ENCODE measurements at regions of chr1 and their contacts with region 1.

Region 1: GRCh38 chr1:22930235-22930912 is 42.3 kb downstream of the LACTBL1 start:
- DNase-seq: peak; percentile 75 to 91 (median 90)
- ATAC-seq: peak; percentile 98
- H3K4me3 ChIP-seq: no peak overlapping the region
- H3K27ac ChIP-seq: no peak overlapping the region
- H3K4me1 ChIP-seq: no peaks in the 10 kb centered on the region; a peak in 1 of 5 replicates
- H3K27me3 ChIP-seq: peaks cover 23 to 55% of the 10 kb centered on the region in 2 experiments
- CTCF ChIP-seq: peak; percentile 89 to 93 (median 91)
- EP300 ChIP-seq: no peak
- POLR2A ChIP-seq: no peak
- RAD21 ChIP-seq: peak; percentile 71 to 91

Region 2: DNA sequence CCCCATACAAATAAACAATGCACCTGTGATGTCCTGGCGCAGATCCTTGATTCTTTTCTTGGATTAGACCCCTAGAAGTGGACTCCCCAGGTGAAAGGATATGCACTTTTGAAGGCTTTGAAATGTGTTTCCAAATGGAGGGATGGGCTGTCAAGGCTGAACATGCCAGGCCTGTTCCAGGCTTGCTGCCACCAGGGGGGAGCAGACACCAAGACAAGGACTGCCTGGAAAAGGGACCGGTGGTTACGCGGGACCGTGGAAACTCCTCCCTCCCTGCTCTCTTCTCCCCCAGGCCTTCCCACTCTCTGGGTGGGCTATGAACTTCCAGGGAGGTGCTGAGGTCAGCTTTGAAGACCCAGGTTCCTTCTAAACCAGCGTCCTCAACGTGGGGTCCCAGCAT is 264.6 kb before region 1 on chr1:
- CTCF ChIA-PET with region 1: interaction called, 9 read pairs
- POLR2A ChIA-PET with region 1: interaction called, 3 read pairs
- in situ Hi-C with region 1: no loop called
- intact Hi-C with region 1: loop called (anchors 1 kb)
- DNase-seq: peak; percentile 46 to 65 (median 58)
- ATAC-seq: peak; percentile 76
- H3K4me3 ChIP-seq: no peak overlapping the region
- H3K27ac ChIP-seq: no peak overlapping the region
- H3K4me1 ChIP-seq: peaks cover 0 to 4% of the 10 kb centered on the region in 2 experiments; a peak in 1 of 5 replicates
- H3K27me3 ChIP-seq: peaks cover 3 to 52% of the 10 kb centered on the region in 2 experiments; a peak in 4 of 5 replicates
- CTCF ChIP-seq: peak; percentile 65 to 78 (median 76)
- EP300 ChIP-seq: no peak
- POLR2A ChIP-seq: no peak
- RAD21 ChIP-seq: peak; percentile 48 to 79

Region 3: GRCh38 chr1:22673486-22674409 is 256.6 kb before region 1 on chr1:
- CTCF ChIA-PET with region 1: interaction called, 22 read pairs
- POLR2A ChIA-PET with region 1: interaction called, 3 read pairs
- in situ Hi-C with region 1: no loop called
- intact Hi-C with region 1: loop called (anchors 1 kb)
- DNase-seq: peak; percentile 57 to 70 (median 66)
- ATAC-seq: peak; percentile 81
- H3K4me3 ChIP-seq: no peak overlapping the region
- H3K27ac ChIP-seq: no peak overlapping the region
- H3K4me1 ChIP-seq: peaks cover 0 to 9% of the 10 kb centered on the region in 2 experiments; a peak in 1 of 5 replicates
- H3K27me3 ChIP-seq: peaks cover 8 to 47% of the 10 kb centered on the region in 2 experiments; a peak in 4 of 5 replicates
- CTCF ChIP-seq: peak; percentile 68 to 81 (median 72)
- EP300 ChIP-seq: no peak
- POLR2A ChIP-seq: no peak
- RAD21 ChIP-seq: peak; percentile 57 to 84

Region 4: DNA sequence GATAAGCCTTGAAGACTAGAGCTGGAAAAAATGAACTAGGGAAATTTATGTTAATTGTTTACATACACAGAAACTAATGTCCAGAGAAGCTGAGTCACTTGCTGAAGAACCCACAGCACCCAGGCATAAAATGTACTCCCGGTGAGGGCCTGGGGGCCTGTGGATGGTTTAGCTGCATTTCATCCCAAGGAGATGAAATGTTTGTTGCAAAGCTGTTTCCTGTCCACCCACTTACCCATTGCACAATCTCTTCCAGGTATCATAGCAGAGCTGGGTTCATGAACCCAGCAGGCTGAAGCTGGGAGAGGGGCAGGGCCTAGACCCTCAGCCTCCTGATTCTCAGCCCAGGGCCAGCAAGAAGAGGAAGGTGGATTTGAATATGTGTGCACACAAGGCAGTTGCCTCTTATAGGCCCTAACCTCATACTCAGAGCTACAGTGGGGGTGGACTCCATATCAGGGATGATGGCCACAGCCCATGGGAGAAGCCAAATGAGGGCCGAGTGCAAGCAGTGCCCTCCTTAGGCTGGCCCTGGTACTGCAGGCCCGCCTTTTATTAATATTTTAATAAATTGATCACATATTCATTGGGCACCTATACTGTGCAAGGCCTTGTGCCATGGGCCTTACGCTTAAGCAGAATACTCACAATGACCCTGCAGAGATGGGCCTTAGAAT is 68.5 kb before region 1 on chr1:
- CTCF ChIA-PET with region 1: no interaction called
- POLR2A ChIA-PET with region 1: no interaction called
- in situ Hi-C with region 1: no loop called
- intact Hi-C with region 1: no loop called
- DNase-seq: peak; percentile 45 to 83 (median 78)
- ATAC-seq: peak; percentile 86
- H3K4me3 ChIP-seq: no peak overlapping the region
- H3K27ac ChIP-seq: no peak overlapping the region
- H3K4me1 ChIP-seq: no peaks in the 10 kb centered on the region
- H3K27me3 ChIP-seq: peaks cover 19 to 67% of the 10 kb centered on the region in 2 experiments
- CTCF ChIP-seq: peak; percentile 83 to 92 (median 90)
- EP300 ChIP-seq: no peak
- POLR2A ChIP-seq: no peak
- RAD21 ChIP-seq: peak; percentile 41 to 72; a peak in 3 of 4 replicates

Region 5: DNA sequence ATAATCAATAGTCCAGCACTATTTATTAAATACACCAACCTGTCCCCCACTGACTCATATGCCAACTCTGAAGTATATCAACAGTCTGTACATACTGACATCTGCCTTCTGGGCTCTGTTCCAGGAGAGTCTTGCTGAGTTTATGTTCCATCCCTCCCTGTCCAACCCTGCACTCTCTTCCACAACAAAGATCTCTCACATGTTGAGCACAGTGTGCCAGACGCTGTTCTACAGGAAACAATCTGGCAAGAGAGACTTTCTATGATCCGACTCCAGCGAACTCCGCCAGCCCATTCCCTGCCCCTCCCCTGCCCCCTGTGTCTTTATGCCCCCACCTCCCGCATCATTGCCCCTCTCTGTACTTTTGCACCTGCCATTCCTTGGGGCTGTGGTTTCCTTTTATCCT is 38.9 kb after region 1 on chr1:
- CTCF ChIA-PET with region 1: no interaction called
- POLR2A ChIA-PET with region 1: no interaction called
- in situ Hi-C with region 1: no loop called
- intact Hi-C with region 1: loop called (anchors 1 kb)
- DNase-seq: no peak
- ATAC-seq: no peak
- H3K4me3 ChIP-seq: no peak overlapping the region
- H3K27ac ChIP-seq: no peak overlapping the region
- H3K4me1 ChIP-seq: no peaks in the 10 kb centered on the region; a peak in 2 of 5 replicates
- H3K27me3 ChIP-seq: peaks cover 15 to 24% of the 10 kb centered on the region in 2 experiments
- CTCF ChIP-seq: no peak
- EP300 ChIP-seq: no peak
- POLR2A ChIP-seq: no peak
- RAD21 ChIP-seq: no peak